ENCODE measurements at regions of chr17 and their contacts with region 1.

Region 1: GRCh38 chr17:40577611-40578065 is 12.4 kb upstream of the CCR7 start:
- DNase-seq: no peak
- H3K4me3 ChIP-seq: no peak overlapping the region
- H3K27ac ChIP-seq: no peak overlapping the region
- H3K4me1 ChIP-seq: no peaks in the 10 kb centered on the region
- H3K27me3 ChIP-seq: 0 out of 2 replicates have a peak, but pooled peaks cover 9% of the 10 kb centered on the region
- CTCF ChIP-seq: no peak

Region 2: DNA sequence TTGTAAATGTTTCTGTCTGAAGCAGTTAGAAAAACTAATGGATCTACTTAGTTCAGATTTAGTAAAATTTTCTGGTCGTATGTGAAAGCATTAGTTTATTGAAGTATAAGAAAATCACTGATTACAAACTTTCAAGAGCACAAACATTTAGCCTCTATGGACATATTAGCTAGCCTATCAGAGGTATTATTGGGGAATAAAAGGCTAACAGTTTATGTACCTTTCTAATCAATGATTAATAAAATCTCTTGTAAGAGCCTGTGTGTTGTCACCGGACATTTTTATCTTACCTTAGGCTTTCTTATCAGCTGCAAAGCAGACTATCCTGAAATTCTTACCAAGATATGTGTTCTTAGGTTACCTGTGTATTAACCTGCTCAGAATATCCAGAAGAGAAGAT is 688.4 kb before region 1 on chr17:
- CTCF ChIA-PET with region 1: interaction called, 15 read pairs
- POLR2A ChIA-PET with region 1: no interaction called
- intact Hi-C with region 1: no loop called
- DNase-seq: no peak
- H3K4me3 ChIP-seq: no peak overlapping the region
- H3K27ac ChIP-seq: no peak overlapping the region
- H3K4me1 ChIP-seq: 0 out of 2 replicates have a peak, but pooled peaks cover 5% of the 10 kb centered on the region
- H3K27me3 ChIP-seq: no peaks in the 10 kb centered on the region
- CTCF ChIP-seq: no peak

Region 3: GRCh38 chr17:40219073-40219860 is 358.4 kb before region 1 on chr17 and contains the start of gene WIPF2:
- CTCF ChIA-PET with region 1: no interaction called
- POLR2A ChIA-PET with region 1: no interaction called
- intact Hi-C with region 1: no loop called
- DNase-seq: peak; percentile 87 to 92
- H3K4me3 ChIP-seq: peak within 1 kb of the TSS; percentile 68
- H3K27ac ChIP-seq: peak within 1 kb of the TSS; percentile 87
- H3K4me1 ChIP-seq: peaks cover 11% of the 10 kb centered on the region; the same call in 1 of the 2 replicates
- H3K27me3 ChIP-seq: no peaks in the 10 kb centered on the region
- CTCF ChIP-seq: peak; percentile 86
- total RNA-seq, gene WIPF2: 23.4 and 37.2 TPM in 2 replicates

Region 4: GRCh38 chr17:40598663-40599467 is 21.2 kb after region 1 on chr17:
- CTCF ChIA-PET with region 1: no interaction called
- POLR2A ChIA-PET with region 1: no interaction called
- intact Hi-C with region 1: no loop called
- DNase-seq: no peak
- H3K4me3 ChIP-seq: no peak overlapping the region
- H3K27ac ChIP-seq: no peak overlapping the region
- H3K4me1 ChIP-seq: peaks cover 8% of the 10 kb centered on the region
- H3K27me3 ChIP-seq: no peaks in the 10 kb centered on the region
- CTCF ChIP-seq: no peak

Region 5: DNA sequence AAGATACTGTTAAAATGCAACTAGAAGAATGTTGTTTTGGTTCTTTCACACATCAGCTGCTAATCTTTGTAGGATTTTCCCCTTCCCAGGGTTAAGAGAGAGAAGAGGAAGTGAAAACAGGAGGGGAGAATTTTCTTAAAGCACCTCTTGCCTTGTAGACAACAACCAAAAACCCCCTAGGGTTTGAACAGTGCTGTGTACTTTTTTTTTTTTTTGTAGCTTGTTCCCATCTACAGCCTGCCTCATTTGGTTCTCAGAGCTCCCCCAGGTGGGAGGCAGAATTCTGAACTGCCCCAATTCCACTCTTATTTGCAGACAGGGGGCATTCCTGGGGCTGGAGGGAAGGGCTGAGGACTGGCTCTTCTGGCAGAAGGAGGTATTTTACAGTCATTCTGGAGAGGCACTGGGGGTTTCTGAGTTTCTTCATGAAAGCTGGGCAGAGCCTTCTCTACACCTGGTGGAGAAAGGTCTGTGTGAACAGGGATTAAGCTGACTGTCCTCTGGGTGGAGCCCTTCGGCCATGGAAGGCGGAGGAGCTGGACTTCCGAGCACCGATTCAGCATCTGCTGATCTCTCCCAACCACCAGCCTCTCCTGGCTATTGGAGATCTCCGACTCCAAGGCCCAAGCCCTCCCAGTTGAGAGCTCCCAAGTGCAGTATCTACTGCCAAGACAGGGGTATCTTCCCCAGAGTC is 37.8 kb after region 1 on chr17:
- CTCF ChIA-PET with region 1: no interaction called
- POLR2A ChIA-PET with region 1: no interaction called
- intact Hi-C with region 1: no loop called
- DNase-seq: peak; percentile 72
- H3K4me3 ChIP-seq: no peak overlapping the region
- H3K27ac ChIP-seq: no peak overlapping the region
- H3K4me1 ChIP-seq: peaks cover 10% of the 10 kb centered on the region
- H3K27me3 ChIP-seq: no peaks in the 10 kb centered on the region
- CTCF ChIP-seq: peak; percentile 73

Region 6: DNA sequence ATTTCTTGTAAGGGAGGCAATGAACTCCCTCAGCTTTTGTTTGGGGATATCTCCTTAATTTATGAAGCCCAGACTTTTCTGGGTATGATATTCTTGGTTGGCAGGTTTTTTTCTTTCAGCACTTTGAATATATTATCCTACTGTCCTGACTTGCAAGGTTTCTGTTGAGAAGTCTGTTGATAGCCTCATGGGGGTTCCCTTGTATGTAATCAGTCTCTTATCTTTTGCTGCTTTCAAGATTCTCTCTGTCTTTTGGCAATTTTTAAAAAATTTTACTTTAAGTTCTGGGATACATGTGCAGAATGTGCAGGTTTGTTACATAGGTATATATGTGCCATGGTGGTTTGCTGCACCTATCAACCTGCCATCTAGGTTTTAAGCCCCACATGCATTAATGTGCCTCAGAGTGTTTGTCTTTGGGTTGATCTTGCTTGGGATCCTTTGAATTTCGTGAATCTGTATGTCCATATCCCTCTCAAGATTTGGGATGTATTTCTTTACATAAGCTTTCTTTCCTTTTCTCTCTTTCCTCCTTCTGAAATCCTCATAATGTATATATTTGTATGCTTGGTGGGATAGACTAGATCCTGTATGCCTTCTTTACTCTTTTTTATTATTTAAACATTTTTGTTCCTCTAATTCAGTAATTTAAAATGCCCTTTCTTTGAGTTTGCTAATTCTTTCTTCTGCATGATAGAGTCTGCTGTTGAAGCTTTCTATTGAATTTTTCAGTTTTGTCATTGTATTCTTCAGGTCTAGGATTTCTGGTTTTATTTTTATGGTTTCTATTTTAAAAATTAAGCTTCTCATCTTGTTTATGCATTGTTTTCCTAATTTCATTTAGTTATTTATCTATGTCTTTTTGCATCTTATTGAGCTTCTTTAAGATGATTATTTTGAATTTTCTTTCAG is 182.7 kb after region 1 on chr17:
- CTCF ChIA-PET with region 1: no interaction called
- POLR2A ChIA-PET with region 1: interaction called, 14 read pairs
- intact Hi-C with region 1: no loop called
- DNase-seq: no peak
- H3K4me3 ChIP-seq: no peak overlapping the region
- H3K27ac ChIP-seq: no peak overlapping the region
- H3K4me1 ChIP-seq: no peaks in the 10 kb centered on the region
- H3K27me3 ChIP-seq: no peaks in the 10 kb centered on the region
- CTCF ChIP-seq: no peak

Region 7: GRCh38 chr17:41013606-41014005 is 436.0 kb after region 1 on chr17:
- CTCF ChIA-PET with region 1: no interaction called
- POLR2A ChIA-PET with region 1: no interaction called
- intact Hi-C with region 1: no loop called
- DNase-seq: no peak
- H3K4me3 ChIP-seq: no peak overlapping the region
- H3K27ac ChIP-seq: peak overlapping the region; percentile 85
- H3K4me1 ChIP-seq: peaks cover 71% of the 10 kb centered on the region
- H3K27me3 ChIP-seq: no peaks in the 10 kb centered on the region
- CTCF ChIP-seq: no peak